Endothelial cell of umbilical vein (primary cell): ENCODE measurements at regions of chr3 and their contacts with region 1.

Region 1: GRCh38 chr3:52407779-52408178 is 37.1 kb downstream of the SEMA3G start:
- DNase-seq: no peak
- H3K4me3 ChIP-seq: no peak overlapping the region
- H3K27ac ChIP-seq: no peak overlapping the region
- H3K4me1 ChIP-seq: peaks cover 20% of the 10 kb centered on the region
- H3K27me3 ChIP-seq: no peaks in the 10 kb centered on the region
- CTCF ChIP-seq: no peak
- POLR2A ChIP-seq: no peak

Region 2: GRCh38 chr3:52190294-52191074 is 217.3 kb before region 1 on chr3:
- CTCF ChIA-PET with region 1: no interaction called
- POLR2A ChIA-PET with region 1: no interaction called
- dilution Hi-C with region 1: no loop called
- intact Hi-C with region 1: no loop called
- DNase-seq: no peak
- H3K4me3 ChIP-seq: no peak overlapping the region
- H3K27ac ChIP-seq: no peak overlapping the region
- H3K4me1 ChIP-seq: no peaks in the 10 kb centered on the region
- H3K27me3 ChIP-seq: no peaks in the 10 kb centered on the region
- CTCF ChIP-seq: no peak
- POLR2A ChIP-seq: no peak

Region 3: DNA sequence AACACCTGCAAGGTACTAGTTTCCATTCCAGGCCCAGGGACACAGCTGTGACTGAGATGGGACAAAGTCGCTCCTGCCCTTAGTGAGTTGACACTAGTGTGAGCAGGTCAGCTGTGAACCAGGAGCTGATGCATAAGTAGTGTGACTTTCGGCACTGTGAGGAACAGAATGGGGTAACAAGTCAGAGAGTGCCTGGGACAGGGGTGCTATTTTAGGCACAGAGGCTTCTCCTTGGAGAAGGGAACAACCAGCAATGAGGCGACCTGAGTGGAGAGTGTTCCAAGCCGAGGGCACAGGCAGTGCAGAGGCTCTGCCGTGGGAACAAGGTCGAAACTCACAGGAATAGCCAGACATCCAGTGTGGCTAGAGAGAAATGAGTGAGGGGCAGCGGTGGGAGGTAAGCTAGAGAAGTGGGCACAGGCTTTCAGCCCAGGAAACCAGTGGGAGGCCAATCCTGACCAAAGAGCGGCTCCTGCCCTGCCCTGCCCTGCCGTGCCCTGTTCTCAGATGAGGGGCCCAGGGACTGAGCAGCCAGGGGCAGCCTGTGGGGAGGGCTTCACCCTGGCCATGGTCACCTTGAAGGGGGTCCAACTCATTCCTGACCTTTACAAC is 77.5 kb before region 1 on chr3:
- CTCF ChIA-PET with region 1: no interaction called
- POLR2A ChIA-PET with region 1: no interaction called
- dilution Hi-C with region 1: no loop called
- intact Hi-C with region 1: no loop called
- DNase-seq: no peak
- H3K4me3 ChIP-seq: no peak overlapping the region
- H3K27ac ChIP-seq: no peak overlapping the region
- H3K4me1 ChIP-seq: no peaks in the 10 kb centered on the region
- H3K27me3 ChIP-seq: no peaks in the 10 kb centered on the region
- CTCF ChIP-seq: no peak
- POLR2A ChIP-seq: no peak

Region 4: DNA sequence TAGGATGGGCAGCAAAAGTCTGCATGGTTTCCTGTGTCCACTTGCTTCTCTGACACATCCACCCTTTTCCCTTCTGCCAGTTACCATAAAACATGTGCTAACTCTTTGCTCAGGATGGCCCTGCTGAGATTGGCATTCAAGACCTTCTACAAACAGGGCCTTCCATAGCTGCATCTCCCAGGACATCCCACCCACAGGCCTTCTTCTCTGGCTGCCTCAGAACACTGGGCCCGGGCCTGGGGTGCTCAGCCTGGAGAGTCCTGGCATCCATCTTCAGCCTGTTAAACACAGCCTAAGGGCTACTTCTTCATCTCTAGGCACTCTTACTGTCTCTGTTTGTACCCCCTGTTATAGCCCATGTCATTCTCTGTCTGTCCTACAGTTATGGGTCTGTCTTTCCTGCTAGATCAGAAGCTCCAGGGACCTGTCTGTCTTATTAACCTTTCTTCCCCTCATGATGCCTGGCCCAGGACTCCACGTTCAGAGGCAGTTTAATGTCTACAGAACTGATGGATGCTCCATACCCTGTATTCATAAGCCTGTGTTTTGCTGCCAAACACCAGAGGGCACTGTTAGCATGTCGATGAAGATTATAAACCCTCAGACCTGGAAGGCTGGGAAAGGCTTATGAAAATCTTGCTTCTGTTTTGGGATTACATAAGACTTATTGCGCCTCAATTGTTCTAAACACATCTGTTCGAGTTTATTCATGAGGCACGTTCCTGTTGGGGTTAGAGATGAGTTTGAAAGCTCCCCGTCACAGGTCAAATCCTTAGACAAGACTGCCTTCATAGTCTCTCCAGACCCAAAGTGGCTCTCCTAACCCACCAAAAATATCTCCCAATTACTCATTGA is 20.6 kb after region 1 on chr3:
- CTCF ChIA-PET with region 1: interaction called, 23 read pairs
- POLR2A ChIA-PET with region 1: no interaction called
- dilution Hi-C with region 1: no loop called
- intact Hi-C with region 1: loop called (anchors 1 kb)
- DNase-seq: peak; percentile 85
- H3K4me3 ChIP-seq: no peak overlapping the region
- H3K27ac ChIP-seq: peak overlapping the region; percentile 96
- H3K4me1 ChIP-seq: peaks cover 25% of the 10 kb centered on the region
- H3K27me3 ChIP-seq: no peaks in the 10 kb centered on the region
- CTCF ChIP-seq: peak; percentile 70 to 79
- POLR2A ChIP-seq: no peak

Region 5: GRCh38 chr3:52481819-52482521 is 74.2 kb after region 1 on chr3:
- CTCF ChIA-PET with region 1: no interaction called
- POLR2A ChIA-PET with region 1: no interaction called
- dilution Hi-C with region 1: no loop called
- intact Hi-C with region 1: no loop called
- DNase-seq: peak; percentile 29
- H3K4me3 ChIP-seq: no peak overlapping the region
- H3K27ac ChIP-seq: no peak overlapping the region
- H3K4me1 ChIP-seq: no peaks in the 10 kb centered on the region
- H3K27me3 ChIP-seq: no peaks in the 10 kb centered on the region
- CTCF ChIP-seq: peak; percentile 66 to 71
- POLR2A ChIP-seq: no peak